ENCODE measurements at regions of chr12 and their contacts with region 1.

Region 1: DNA sequence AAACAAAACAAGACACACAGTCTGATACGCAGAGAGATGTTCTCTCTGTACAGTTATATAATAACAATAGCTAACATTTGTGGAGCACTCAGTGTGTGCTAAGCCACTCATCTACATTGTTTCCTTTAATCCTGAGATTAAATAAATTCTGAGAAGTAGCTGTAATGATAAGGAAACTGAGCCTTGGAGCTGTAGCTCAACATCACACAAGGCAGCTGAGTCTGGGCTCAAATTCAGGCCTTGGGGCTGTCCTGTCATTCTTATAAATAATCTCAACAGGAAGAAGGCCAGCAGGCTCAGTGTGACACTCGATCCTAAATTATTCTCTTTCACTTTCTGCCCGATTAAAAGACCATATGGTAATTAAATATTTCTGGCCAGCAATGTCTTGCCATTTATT is 24.5 kb downstream of the CDKN1B start:
- DNase-seq: no peak

Region 2: DNA sequence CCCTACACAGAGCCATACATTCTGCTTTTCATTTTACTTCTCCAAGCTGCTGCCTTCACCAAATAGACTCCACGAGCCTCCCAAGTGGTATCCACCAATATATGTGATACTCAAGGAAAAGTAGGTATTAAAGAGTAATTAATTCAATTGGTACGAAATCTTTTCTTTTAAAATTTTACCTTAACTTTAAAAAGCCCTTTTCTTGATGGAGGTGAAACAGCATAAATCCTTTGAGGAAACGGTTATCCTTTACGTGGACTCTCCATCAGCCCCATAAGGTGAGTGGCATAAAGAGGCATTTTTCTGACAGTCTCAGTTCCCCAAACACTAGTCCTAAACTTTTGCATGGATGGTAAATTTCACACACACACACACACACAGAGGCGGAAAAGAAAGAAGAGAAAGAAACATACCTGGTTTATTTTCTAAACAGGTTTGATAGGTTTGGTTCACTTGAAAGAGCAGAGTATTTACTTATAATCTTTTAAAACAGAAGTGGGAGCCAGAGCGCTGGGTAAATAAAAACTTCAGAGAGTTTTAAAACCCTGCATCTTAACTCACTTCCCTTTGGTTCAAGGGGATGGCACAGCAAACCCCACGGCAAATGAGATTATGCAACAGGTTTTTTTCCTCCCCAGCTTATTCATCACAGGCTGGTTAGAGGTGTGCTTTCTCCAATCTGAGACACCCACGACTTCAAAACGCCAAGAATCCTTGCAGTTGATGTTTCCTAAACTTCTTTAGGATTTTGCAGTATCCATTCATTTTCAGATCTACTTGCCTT is 180.9 kb before region 1 on chr12:
- intact Hi-C with region 1: no loop called
- DNase-seq: no peak

Region 3: GRCh38 chr12:12779529-12779928 is 37.9 kb after region 1 on chr12:
- intact Hi-C with region 1: loop called (anchors 5 kb)
- DNase-seq: no peak

Measured in cardiac septum (tissue), 1 donor.